Activated CD4-positive, alpha-beta T cell treated with anti-CD3 and anti-CD28 coated beads for 36 hours (primary cell): ENCODE measurements at regions of chr14 and their contacts with region 1.

Region 1: DNA sequence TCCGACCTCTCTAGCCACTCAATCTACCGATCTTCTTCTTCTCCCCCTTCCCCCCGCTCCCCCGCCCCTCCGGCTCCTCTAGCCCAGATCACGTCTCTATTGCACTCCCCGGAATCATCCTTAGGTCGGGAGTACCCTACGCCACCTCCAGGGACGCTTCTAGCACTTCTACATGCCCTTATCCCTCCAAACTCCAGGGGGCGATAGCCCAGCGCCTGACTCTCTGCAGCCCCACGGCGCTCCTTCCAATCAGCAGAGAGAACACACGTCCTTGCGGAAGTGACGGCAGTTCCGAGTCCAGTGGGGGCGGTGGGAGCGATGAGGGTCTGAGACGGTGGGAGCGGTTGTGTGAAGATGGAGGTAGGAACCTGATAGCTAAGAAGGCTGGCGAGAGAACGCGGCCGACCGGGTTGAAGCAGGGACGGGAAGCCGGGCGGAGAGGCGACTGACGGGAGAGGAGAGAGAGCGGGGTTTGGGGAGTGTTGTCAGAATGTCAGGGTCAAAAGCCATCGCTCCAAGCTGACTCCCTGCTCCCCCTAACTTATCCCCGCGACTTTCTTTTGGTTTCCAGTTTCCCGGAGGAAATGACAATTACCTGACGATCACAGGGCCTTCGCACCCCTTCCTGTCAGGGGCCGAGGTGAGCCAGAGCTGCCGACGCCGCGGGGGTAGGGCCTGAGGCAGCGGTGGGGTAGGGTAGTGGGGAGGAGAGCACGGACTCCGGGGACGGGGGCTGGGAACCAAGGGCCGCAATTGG is at the starts of genes RAB2B and TOX4:
- DNase-seq: peak; percentile 96
- ATAC-seq: peak; percentile 98
- H3K4me3 Mint-ChIP-seq: peak within 1 kb of the TSS; percentile 99
- H3K27ac Mint-ChIP-seq: peak within 1 kb of the TSS; percentile 100
- H3K4me1 Mint-ChIP-seq: peaks cover 22% of the 10 kb centered on the region
- H3K27me3 Mint-ChIP-seq: no peaks in the 10 kb centered on the region
- total RNA-seq, gene RAB2B: 21.2 to 22.0 TPM
- total RNA-seq, gene TOX4: 79.5 to 85.6 TPM

Region 2: DNA sequence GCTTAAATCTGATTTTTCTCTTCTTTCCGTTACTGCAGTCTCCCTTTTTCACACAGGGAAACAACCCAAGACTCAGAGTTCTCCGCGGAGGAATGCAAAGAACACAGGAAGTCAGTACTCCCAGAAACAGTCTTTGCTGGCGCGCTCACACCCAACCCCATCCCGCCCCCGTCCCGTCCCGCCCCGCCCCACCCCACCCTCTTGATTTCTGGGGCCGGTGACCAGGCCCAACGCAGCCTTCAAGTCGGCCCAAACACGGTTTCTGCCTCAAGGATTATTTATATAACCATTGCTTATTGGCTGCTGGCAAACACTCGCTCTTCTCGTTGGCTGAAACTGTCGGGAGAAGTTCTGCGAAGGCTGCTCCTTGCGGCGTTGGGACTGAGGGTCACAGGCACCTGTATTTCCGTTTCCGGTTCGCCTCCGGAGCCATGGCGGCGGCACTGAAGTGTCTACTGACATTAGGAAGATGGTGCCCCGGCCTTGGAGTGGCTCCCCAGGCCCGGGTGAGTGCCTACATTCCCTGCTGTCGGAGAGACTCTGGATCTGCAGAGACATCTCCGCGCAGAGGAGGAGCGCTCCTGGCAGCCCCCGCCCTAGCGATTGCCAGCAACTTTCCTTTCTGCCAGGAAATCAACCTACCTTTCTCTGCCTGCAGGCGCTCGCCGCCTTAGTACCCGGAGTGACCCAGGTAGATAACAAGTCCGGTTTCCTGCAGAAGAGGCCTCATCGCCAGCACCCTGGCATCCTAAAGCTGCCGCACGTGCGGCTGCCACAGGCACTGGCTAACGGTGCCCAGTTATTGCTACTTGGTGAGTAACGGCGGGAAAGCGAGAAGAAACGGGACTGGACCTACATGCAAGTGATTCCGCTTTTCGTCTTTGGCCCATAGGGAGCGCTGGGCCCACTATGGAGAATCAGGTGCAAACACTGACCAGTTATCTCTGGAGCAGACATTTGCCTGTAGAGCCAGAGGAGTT is 487.2 kb before region 1 on chr14 and contains the start of gene METTL17:
- CTCF ChIA-PET with region 1: no interaction called
- POLR2A ChIA-PET with region 1: no interaction called
- intact Hi-C with region 1: loop called in 1 of 2 experiments (anchors 1 kb)
- DNase-seq: peak; percentile 93
- ATAC-seq: peak; percentile 97
- H3K4me3 Mint-ChIP-seq: peak within 1 kb of the TSS; percentile 92
- H3K27ac Mint-ChIP-seq: peak within 1 kb of the TSS; percentile 89
- H3K4me1 Mint-ChIP-seq: peaks cover 37% of the 10 kb centered on the region
- H3K27me3 Mint-ChIP-seq: no peaks in the 10 kb centered on the region
- total RNA-seq, gene METTL17: 89.3 to 90.0 TPM

Region 3: GRCh38 chr14:21414137-21414631 is 62.9 kb before region 1 on chr14:
- CTCF ChIA-PET with region 1: interaction called, 5 read pairs
- POLR2A ChIA-PET with region 1: no interaction called
- intact Hi-C with region 1: loop called in 1 of 2 experiments (anchors 1 kb)
- DNase-seq: no peak
- ATAC-seq: peak; percentile 91
- H3K4me3 Mint-ChIP-seq: no peak overlapping the region
- H3K27ac Mint-ChIP-seq: peak overlapping the region; percentile 88
- H3K4me1 Mint-ChIP-seq: peaks cover 26% of the 10 kb centered on the region
- H3K27me3 Mint-ChIP-seq: no peaks in the 10 kb centered on the region

Region 4: DNA sequence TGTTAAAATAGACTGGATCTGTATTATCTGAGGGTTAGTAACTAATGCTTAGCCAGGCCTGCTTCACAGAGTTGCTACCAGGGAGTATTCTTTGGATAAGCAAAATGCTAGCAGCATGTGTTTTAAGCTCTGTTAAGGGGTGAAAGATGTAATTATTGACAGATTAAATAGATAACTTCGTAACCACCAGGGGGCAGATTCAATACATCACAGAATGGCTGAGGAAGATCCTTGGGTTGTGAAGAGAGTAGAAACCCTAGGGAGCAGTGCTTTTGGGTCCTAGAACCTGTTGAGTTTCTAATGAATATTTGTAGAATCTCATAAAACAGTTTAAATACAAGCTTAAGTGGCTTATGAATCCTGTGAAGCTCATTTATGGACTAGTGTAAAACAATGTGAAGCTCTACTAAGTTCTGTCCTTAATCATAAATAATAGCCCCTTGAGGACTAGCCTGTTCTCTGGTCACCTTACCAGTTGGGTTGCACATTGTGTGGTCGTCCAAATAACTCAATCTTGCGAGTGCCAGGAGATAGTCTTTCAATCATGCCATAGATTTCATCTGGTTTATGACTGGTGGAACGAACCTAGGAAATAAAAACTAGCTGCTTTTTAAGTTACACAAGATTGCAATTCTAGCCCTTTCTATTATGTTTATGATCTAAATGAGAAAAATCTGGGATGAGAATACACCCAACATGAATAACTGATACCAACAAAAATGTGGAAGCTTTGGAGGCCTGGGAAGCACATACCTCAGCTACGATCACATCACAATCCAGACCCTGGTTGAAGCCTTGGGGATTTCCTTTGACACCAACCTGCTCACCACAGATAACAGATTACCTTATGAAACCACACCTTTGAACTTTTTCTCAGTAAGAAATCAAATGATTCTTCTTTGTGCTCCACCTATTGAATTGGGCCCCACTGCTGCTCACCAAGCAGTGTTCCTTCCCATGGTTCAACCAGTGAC is 21.7 kb after region 1 on chr14:
- CTCF ChIA-PET with region 1: interaction called, 38 read pairs
- POLR2A ChIA-PET with region 1: interaction called, 4 read pairs
- intact Hi-C with region 1: no loop called
- DNase-seq: peak; percentile 22
- ATAC-seq: peak; percentile 78
- H3K4me3 Mint-ChIP-seq: no peak overlapping the region
- H3K27ac Mint-ChIP-seq: peak overlapping the region; percentile 64
- H3K4me1 Mint-ChIP-seq: peaks cover 23% of the 10 kb centered on the region
- H3K27me3 Mint-ChIP-seq: no peaks in the 10 kb centered on the region

Region 5: GRCh38 chr14:21557084-21557901 is 80.2 kb after region 1 on chr14:
- CTCF ChIA-PET with region 1: interaction called, 4 read pairs
- POLR2A ChIA-PET with region 1: no interaction called
- intact Hi-C with region 1: loop called (anchors 1 to 5 kb)
- DNase-seq: peak; percentile 87
- ATAC-seq: peak; percentile 68
- H3K4me3 Mint-ChIP-seq: no peak overlapping the region
- H3K27ac Mint-ChIP-seq: no peak overlapping the region
- H3K4me1 Mint-ChIP-seq: peaks cover 4% of the 10 kb centered on the region
- H3K27me3 Mint-ChIP-seq: no peaks in the 10 kb centered on the region